WTC11 (cell line): ENCODE measurements at regions of chr11 and their contacts with region 1.

Region 1: DNA sequence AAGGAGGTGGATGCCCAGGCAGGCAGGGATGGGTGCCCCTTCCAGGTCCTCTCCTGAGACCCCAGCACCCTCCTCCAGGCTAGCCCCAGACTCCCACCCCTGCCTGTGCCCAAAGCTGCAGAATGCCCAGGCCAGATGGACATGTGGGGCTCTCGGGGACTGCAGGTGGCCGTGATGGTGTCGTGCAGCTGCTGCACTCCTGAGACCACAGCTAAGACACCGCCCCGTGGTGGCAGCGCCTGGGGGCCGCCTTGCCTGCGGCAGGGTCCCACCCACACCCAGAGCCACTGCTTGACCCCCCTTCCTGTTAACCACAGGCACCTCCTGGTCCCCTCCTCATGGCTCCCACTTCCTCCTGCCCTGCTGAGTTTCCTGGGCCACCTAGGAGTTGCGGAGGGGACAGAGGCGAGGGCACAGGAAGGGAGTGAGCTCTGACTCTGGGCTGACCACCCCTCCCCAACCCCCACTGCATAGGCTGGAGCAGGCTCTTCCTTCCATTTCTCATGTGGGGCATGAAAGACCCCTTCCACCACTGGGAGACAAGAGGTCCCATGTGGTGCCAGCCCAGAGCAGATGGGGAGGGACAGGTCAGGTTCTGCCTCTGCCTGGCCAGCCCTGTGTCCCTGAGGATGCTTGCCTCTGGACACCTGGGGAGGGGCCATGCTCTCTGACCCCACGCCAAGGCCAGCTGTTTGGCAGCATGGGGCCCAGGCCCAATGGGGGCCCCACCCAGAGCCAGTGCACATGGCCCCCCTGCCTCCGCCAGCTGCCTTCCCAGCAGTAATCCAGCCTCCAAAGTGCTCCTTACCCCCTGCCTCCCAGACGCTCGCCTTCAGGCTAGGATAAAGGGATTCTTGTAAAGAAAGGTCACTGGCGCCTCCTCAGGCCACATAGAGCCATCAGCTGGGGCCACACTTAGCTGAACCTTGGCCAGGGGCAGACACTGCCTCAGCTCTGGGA is 29.3 kb downstream of the OSBPL5 start:
- DNase-seq: peak; percentile 46
- ATAC-seq: peak; percentile 66
- H3K4me3 Mint-ChIP-seq: no peak overlapping the region
- H3K27ac Mint-ChIP-seq: no peak overlapping the region
- H3K4me1 Mint-ChIP-seq: 0 out of 2 replicates have a peak, but pooled peaks cover 3% of the 10 kb centered on the region
- H3K27me3 Mint-ChIP-seq: no peaks in the 10 kb centered on the region
- CTCF ChIP-seq: no peak

Region 2: GRCh38 chr11:3069425-3069824 is 66.3 kb before region 1 on chr11:
- CTCF ChIA-PET with region 1: no interaction called
- POLR2A ChIA-PET with region 1: no interaction called
- DNase-seq: no peak
- ATAC-seq: no peak
- H3K4me3 Mint-ChIP-seq: no peak overlapping the region
- H3K27ac Mint-ChIP-seq: no peak overlapping the region
- H3K4me1 Mint-ChIP-seq: peaks cover 2% of the 10 kb centered on the region
- H3K27me3 Mint-ChIP-seq: peaks cover 6% of the 10 kb centered on the region
- CTCF ChIP-seq: no peak

Region 3: DNA sequence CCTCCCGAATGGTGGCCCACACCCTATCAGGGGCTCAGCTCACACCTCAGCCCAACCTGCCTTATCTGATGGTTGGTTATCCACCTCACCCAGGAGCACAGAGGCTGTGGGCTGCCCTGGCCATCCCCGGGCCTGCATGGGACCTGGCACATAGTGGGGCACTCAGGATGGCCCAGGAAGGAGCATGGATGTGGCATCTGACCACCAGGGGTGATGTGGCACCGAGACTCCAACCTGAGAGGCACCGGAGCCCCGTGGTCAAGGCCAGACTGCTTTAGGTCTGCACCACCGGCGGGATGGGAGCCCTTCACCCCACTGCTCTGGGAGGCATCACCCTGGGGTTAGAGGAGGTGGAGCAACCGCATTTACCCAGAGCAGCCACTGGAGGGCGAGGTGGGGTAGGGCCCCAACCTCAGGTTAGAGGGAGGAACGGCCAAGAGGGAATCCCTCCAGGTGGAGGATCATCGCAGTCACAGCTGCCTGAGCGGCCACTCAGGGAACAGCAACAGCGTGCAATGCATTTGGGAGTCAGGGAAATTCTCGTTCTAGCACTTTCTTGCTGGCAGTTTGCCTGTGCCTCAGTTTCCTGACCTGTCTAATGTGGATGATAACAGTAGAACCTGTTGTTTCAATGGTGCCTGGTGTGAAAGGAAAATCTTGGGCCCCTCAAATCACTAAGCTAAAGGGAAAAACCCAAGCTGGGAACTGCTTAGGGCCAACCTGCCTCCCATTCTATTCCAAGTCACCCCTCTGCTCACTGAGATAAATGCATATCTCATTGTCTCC is 25.6 kb before region 1 on chr11:
- CTCF ChIA-PET with region 1: interaction called, 17 read pairs
- POLR2A ChIA-PET with region 1: no interaction called
- DNase-seq: peak; percentile 85
- ATAC-seq: peak; percentile 93
- H3K4me3 Mint-ChIP-seq: no peak overlapping the region
- H3K27ac Mint-ChIP-seq: no peak overlapping the region
- H3K4me1 Mint-ChIP-seq: peaks cover 17% of the 10 kb centered on the region
- H3K27me3 Mint-ChIP-seq: peaks cover 3% of the 10 kb centered on the region; the same call in 1 of the 2 replicates
- CTCF ChIP-seq: peak; percentile 65

Region 4: DNA sequence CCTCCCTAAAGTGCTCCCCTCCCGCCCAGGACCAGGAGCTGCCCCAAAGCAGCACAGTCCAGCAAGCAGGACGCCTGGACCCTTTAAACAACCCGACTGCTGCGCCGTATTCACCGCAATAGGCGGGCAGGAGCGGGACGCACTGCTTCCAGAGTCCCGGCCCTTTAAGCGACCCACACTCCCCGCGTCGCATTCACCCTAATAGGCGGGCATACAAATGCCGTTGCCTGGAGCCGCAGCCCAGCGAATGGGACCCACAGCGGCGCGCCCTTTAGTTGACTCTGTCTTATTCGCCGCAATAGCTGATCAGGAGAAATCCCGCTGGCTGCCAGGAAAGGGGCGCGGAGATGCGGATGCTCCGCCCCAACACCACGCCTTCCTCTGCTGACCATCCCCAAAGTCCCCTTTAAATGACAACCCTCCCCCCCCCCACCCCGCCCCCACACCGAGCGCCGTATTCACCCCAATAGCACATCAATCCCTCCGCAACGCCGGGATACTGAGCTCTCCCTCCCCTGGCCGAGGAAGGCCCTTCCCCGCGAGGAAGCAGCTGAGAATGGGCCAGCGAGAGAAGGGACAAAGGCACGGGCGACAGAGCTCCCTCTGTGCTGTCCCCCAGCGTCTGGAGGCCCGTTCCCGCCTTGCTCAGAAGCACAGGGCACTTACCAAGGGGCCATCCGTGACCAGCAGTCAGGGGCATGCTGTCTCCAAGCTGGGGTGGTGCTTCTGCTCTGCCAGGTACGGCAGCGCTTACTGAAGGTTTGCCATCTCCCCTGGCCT is 24.7 kb after region 1 on chr11:
- CTCF ChIA-PET with region 1: interaction called, 13 read pairs
- POLR2A ChIA-PET with region 1: no interaction called
- DNase-seq: peak; percentile 93
- ATAC-seq: peak; percentile 87
- H3K4me3 Mint-ChIP-seq: peak overlapping the region; percentile 66
- H3K27ac Mint-ChIP-seq: no peak overlapping the region
- H3K4me1 Mint-ChIP-seq: peaks cover 50% of the 10 kb centered on the region
- H3K27me3 Mint-ChIP-seq: peaks cover 13% of the 10 kb centered on the region
- CTCF ChIP-seq: no peak

Region 5: DNA sequence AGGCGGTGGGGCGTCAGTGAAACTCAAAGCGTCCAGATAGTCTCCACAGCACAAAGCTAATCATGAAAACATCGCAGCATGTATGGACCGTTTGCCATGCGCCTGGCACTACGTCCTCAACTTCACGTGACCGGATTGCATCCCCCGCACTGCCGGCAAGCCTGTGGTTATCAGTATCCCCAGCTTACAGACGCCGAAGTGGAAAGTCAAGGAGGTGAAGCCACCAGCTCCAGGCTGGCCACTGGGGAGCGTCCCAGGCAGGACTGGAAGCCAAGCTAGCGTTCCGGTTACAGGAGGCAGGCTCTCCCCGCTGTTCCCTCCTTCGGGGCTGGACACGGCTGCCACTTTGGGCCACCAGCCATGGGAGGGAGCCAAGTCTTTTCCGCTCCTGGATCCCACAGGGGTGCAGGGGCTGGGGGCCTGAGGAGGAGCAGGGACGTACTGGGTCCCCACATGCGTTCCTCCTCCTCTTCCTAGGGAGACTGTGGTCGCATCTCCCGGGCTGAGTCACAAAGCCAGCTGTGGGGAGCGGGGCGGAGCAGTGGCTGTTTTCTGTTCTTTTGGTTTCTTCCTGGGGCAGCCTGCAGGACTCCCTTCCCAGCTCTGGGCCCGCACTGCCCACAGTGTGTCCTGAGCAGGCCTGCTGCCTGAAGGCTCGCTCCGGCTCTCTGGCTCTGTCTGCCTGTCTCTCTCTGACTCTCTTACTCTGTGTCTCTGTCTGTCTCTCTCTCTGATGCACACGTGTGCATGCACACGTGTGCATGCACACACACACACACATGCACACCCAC is 33.7 kb after region 1 on chr11:
- CTCF ChIA-PET with region 1: interaction called, 13 read pairs
- POLR2A ChIA-PET with region 1: no interaction called
- DNase-seq: peak; percentile 52
- ATAC-seq: peak; percentile 66
- H3K4me3 Mint-ChIP-seq: 0 out of 2 replicates have a peak overlapping the region, but pooled peaks have one; percentile 8
- H3K27ac Mint-ChIP-seq: no peak overlapping the region
- H3K4me1 Mint-ChIP-seq: peaks cover 7% of the 10 kb centered on the region
- H3K27me3 Mint-ChIP-seq: peaks cover 26% of the 10 kb centered on the region
- CTCF ChIP-seq: no peak

Region 6: DNA sequence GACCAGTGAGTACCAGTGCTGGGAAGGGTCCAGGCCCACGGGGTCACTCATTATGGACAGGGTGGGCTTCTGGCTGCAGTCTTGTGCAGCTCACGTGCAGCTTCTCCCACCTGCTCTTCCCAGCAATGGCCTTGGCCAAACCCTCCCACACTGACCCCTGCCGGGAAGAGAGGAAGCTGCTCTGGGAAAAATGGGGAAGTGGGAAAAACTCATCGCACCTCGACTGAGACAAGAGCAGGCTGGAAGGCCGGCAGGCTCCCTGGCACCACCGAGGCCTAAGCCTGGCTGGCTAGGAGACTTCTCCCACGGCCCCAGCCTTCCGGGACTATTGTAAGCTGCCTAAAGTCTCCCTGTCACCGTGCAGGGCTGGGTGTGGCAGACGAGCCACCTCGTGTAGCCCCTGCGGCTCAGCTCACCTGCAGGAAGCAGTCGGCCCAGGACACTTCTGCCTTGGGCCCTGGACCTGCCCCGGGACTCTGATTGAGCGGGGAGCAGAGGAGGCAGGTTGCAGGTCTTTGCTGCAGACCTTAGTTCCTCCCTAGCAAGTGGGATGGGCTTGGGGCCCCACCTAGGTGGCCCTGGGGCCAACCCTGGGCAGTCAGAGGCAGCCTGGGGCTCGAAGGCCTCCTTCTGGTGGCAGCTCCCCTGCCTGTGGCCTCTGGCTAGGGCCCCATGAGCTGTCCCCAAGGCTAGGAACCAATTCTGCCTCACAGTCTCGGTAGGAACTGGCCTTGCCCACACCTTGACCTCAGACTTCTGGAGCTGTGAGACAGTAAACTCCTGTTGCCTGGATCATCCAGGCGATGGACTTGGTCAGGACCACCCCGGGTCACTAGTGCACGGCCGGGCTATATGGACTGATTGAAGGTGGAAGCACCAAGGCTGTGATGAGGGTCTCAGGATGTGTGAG is 59.7 kb after region 1 on chr11:
- CTCF ChIA-PET with region 1: interaction called, 11 read pairs
- POLR2A ChIA-PET with region 1: no interaction called
- DNase-seq: no peak
- ATAC-seq: no peak; the same call in 1 of the 2 replicates
- H3K4me3 Mint-ChIP-seq: no peak overlapping the region
- H3K27ac Mint-ChIP-seq: no peak overlapping the region
- H3K4me1 Mint-ChIP-seq: peaks cover 13% of the 10 kb centered on the region
- H3K27me3 Mint-ChIP-seq: peaks cover 2% of the 10 kb centered on the region; the same call in 1 of the 2 replicates
- CTCF ChIP-seq: no peak

Region 7: DNA sequence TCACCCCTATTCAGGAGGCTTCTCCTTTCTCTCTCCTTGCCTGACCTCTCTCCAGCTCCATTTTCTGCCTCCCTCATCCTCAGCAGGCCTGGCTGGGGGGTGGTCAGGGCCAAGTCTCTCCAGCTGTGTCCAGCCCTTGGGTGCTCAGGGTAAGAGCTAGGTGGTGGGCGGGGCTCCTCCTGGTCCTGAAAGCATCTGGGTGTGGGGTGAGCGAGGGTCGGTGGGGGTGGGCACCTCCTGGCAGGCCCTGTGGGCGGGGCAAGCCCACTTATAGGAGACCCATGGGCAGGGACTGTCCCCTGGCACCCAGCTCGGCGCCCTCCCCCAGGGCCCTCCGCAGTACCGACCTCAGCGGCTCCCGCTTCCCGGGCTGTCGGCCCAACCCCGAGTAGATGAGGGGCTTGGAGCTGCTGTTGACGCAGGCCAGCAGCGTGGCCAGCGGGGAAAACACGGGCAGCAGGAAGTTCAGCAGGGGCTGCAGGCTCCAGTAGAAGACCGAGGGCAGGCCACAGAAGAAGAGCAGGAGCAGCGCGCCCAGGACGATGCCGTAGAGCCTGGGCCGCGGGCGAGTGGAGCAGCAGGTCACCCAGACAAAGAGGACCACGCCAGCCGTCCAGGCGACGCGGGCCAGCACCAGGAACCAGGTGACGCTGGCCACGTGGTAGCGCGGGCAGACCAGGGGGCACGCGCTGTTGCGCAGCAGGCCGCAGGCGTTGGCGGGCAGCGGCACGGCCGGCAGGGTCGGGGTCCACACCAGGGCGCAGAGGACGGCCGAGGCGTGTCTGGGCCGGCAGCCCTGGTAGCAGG is 82.1 kb after region 1 on chr11:
- CTCF ChIA-PET with region 1: interaction called, 13 read pairs
- POLR2A ChIA-PET with region 1: no interaction called
- DNase-seq: peak; percentile 10
- ATAC-seq: no peak
- H3K4me3 Mint-ChIP-seq: no peak overlapping the region
- H3K27ac Mint-ChIP-seq: no peak overlapping the region
- H3K4me1 Mint-ChIP-seq: peaks cover 41% of the 10 kb centered on the region
- H3K27me3 Mint-ChIP-seq: no peaks in the 10 kb centered on the region; the same call in 1 of the 2 replicates
- CTCF ChIP-seq: no peak

Region 8: GRCh38 chr11:3222941-3223915 is 87.5 kb after region 1 on chr11:
- CTCF ChIA-PET with region 1: interaction called, 13 read pairs
- POLR2A ChIA-PET with region 1: no interaction called
- DNase-seq: no peak
- ATAC-seq: no peak
- H3K4me3 Mint-ChIP-seq: no peak overlapping the region
- H3K27ac Mint-ChIP-seq: no peak overlapping the region
- H3K4me1 Mint-ChIP-seq: peaks cover 32% of the 10 kb centered on the region
- H3K27me3 Mint-ChIP-seq: no peaks in the 10 kb centered on the region
- CTCF ChIP-seq: no peak